ENCODE measurements at regions of chr15 and their contacts with region 1.

Region 1: DNA sequence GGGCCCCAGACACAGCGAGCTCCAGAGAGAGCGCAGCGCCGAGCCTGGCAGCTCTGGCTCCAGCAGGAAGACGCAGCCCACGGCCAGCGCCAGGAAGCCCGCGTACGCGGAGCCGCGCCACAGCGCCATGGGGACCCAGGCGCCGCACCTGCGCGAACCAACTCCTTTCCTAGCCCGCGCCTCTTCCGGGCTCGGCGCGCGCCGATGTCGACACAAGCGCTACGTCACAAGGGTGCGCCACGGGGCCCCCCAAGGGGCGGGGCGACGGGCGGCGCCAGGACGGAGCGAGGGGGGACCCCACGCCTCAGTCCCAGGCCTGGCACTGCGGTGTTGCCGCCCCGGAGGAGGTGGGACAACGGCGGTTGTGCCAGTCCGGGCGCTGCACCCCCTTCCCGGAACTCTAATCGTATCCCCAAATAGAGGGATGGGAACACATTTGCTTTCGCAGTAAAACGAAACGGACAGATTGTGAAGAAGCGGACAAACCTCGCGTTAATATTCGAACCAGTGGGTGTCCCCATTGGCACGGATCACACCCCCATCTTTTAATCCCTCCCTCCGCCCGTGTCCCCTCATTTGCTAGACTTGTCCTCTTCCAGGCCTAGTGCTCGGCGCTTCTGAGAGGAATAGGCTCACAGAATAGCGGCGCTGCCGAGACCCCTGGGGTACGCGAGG is at the start of gene ADPGK:
- DNase-seq: peak; percentile 86 to 95
- H3K4me3 ChIP-seq: peak within 1 kb of the TSS; percentile 97 to 98
- H3K27ac ChIP-seq: peak within 1 kb of the TSS; percentile 90 to 95
- H3K4me1 ChIP-seq: peaks cover 0 to 49% (median 21%) of the 10 kb centered on the region in 4 donors
- H3K27me3 ChIP-seq: no peaks in the 10 kb centered on the region
- CTCF ChIP-seq: no peak

Region 2: GRCh38 chr15:72685925-72686794 is 97.5 kb before region 1 on chr15 and contains the starts of genes BBS4 and HIGD2B:
- intact Hi-C with region 1: loop called (anchors 5 kb)
- DNase-seq: peak; percentile 86 to 91
- H3K4me3 ChIP-seq: peak within 1 kb of the TSS; percentile 64
- H3K27ac ChIP-seq: peak within 1 kb of the TSS; percentile 87 to 93
- H3K4me1 ChIP-seq: peaks cover 0 to 15% (median 8%) of the 10 kb centered on the region in 4 donors
- H3K27me3 ChIP-seq: no peaks in the 10 kb centered on the region
- CTCF ChIP-seq: no peak

Region 3: DNA sequence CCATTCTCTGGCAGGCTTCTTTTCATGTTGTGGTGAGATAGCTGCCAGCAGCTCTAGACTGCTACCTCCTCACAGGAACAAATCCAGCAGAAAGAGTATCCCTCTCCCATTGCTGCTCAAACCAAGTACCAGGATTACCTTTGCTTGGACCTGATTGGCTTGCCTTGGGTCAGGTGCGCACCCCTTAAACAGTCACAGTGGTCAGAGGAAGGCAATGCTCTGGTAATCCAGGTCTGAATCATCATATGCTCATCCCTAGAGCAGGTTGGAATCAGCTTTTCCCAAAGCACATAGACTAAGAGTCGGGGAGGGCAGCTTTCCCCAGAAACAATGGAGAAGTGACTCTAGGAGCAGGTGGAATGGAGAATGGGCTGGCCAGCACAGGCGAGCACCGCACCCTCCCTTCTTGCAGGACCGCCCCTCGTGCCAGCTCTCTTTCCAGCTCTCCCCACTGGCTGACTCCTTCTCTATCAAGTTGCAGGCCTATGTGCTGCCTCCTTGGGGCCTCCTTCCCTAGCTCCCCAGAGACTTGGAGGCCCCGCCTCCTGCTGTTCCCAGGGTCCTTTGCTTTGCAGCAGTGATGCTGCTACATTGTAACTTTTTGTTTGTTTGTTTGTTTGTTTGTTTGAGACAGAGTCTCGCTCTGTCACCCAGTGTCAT is 29.8 kb after region 1 on chr15:
- intact Hi-C with region 1: no loop called
- DNase-seq: no peak
- H3K4me3 ChIP-seq: no peak overlapping the region
- H3K27ac ChIP-seq: no peak overlapping the region
- H3K4me1 ChIP-seq: no peaks in the 10 kb centered on the region
- H3K27me3 ChIP-seq: no peaks in the 10 kb centered on the region
- CTCF ChIP-seq: no peak

Region 4: GRCh38 chr15:73081321-73081958 is 297.7 kb after region 1 on chr15:
- intact Hi-C with region 1: no loop called
- DNase-seq: no peak
- H3K4me3 ChIP-seq: no peak overlapping the region
- H3K27ac ChIP-seq: no peak overlapping the region
- H3K4me1 ChIP-seq: peaks cover 0 to 47% (median 21%) of the 10 kb centered on the region in 4 donors
- H3K27me3 ChIP-seq: no peaks in the 10 kb centered on the region
- CTCF ChIP-seq: peak; percentile 72

Region 5: GRCh38 chr15:73273181-73274002 is 489.7 kb after region 1 on chr15:
- intact Hi-C with region 1: loop called (anchors 10 kb)
- DNase-seq: peak in 1 of 2 donors; percentile 38
- H3K4me3 ChIP-seq: no peak overlapping the region
- H3K27ac ChIP-seq: no peak overlapping the region
- H3K4me1 ChIP-seq: peaks cover 0 to 4% (median 0%) of the 10 kb centered on the region in 4 donors
- H3K27me3 ChIP-seq: no peaks in the 10 kb centered on the region
- CTCF ChIP-seq: peak; percentile 68 to 70

Measured in tibial artery (tissue), 4 donors.